HCT116 (cell line): ENCODE measurements at regions of chr9 and their contacts with region 1.

Region 1: GRCh38 chr9:72856972-72857623 is 95.8 kb downstream of the ALDH1A1 start:
- DNase-seq: peak; percentile 65
- ATAC-seq: peak; percentile 79
- H3K4me3 ChIP-seq: no peak overlapping the region
- H3K27ac ChIP-seq: no peak overlapping the region
- H3K4me1 ChIP-seq: peaks cover 8 to 21% of the 10 kb centered on the region in 2 experiments; a peak in 3 of 4 replicates
- H3K27me3 ChIP-seq: no peaks in the 10 kb centered on the region
- CTCF ChIP-seq: peak; percentile 60 to 81 (median 68); a peak in 5 of 6 replicates
- POLR2A ChIP-seq: no peak
- RAD21 ChIP-seq: peak; percentile 65

Region 2: DNA sequence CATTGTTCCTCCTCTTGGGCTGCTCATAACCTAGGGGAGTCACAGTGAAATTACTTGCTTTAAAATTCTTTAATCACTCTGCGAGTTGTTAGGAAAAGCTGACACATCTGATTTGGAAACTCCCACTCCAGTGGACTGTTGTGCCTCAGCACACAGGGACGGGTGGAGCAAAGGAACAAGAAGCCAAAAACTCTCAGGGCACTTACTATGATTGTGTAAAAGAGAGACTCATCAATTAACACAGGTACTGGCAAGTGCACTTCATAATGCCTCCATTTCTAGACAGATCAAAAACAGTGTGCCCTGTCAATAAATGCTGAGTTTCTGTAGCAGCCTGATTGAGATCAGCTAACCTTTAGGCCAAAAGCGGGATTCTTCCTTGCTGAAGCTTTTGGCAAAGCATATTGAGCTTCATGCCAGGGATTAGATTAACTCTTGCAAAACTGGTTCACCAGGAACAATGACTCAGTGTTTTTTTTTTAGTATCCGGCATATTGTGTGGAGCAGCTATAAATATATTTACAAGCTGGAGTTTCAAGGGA is 279.8 kb before region 1 on chr9:
- CTCF ChIA-PET with region 1: no interaction called
- POLR2A ChIA-PET with region 1: no interaction called
- RAD21 ChIA-PET with region 1: no interaction called
- intact Hi-C with region 1: no loop called
- DNase-seq: peak; percentile 68
- ATAC-seq: peak; percentile 37
- H3K4me3 ChIP-seq: peak overlapping the region; percentile 12 to 38; a peak in 3 of 4 replicates
- H3K27ac ChIP-seq: peak overlapping the region; percentile 81
- H3K4me1 ChIP-seq: peaks cover 65 to 88% of the 10 kb centered on the region in 2 experiments
- H3K27me3 ChIP-seq: no peaks in the 10 kb centered on the region
- CTCF ChIP-seq: no peak
- POLR2A ChIP-seq: no peak
- RAD21 ChIP-seq: peak; percentile 47

Region 3: GRCh38 chr9:72834994-72835393 is 22.1 kb before region 1 on chr9:
- CTCF ChIA-PET with region 1: interaction called, 3 read pairs
- POLR2A ChIA-PET with region 1: no interaction called
- RAD21 ChIA-PET with region 1: no interaction called
- intact Hi-C with region 1: loop called (anchors 2 kb)
- DNase-seq: no peak
- ATAC-seq: no peak
- H3K4me3 ChIP-seq: no peak overlapping the region
- H3K27ac ChIP-seq: no peak overlapping the region
- H3K4me1 ChIP-seq: no peaks in the 10 kb centered on the region
- H3K27me3 ChIP-seq: no peaks in the 10 kb centered on the region
- CTCF ChIP-seq: no peak
- POLR2A ChIP-seq: no peak
- RAD21 ChIP-seq: no peak

Region 4: DNA sequence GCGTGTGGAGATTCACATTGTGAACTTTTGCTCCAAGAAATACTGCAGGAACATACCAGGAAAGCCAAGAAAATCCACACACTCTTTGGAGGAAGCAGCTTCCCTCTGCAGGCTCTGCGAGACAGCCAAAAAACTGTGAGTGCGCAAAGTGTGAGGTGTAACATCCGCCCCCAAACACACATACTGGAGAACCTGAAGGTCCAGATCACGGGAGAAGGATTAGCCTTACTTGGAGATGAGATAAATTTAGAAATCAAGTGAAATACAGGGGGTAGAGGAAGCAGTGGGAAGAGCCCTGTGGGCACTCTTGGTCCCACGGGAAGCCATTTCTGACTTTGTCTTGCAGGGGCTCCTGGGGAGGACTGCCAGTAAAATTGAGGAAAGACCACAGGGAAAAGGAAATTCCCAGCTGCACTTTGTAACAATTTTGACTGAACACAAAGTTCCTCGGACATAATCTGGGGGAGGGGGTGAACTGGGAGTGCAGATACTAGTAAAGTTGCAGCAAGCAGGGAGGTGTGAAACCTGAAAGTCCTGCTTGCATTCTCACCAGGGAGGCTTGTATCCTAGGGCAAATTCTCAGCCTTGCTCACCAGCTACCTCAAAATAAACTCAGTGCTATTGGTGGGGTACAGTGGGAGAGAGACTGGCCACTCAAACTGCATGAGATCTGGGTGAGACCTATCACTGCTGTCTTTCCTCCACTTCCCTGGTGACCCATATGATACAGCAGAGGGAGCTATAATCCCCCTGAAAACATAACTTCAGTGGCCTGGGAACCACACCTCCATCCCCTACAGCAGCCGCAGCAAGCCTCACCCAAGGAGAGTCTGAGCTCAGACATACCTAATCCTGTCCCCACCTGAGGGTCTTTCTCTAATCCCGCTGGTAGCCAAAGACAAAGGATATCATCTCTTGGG is 13.3 kb before region 1 on chr9:
- CTCF ChIA-PET with region 1: interaction called, 16 read pairs
- POLR2A ChIA-PET with region 1: no interaction called
- RAD21 ChIA-PET with region 1: no interaction called
- intact Hi-C with region 1: no loop called
- DNase-seq: no peak
- ATAC-seq: peak; percentile 99
- H3K4me3 ChIP-seq: no peak overlapping the region
- H3K27ac ChIP-seq: no peak overlapping the region
- H3K4me1 ChIP-seq: peaks cover 3 to 4% of the 10 kb centered on the region in 2 experiments; a peak in 3 of 4 replicates
- H3K27me3 ChIP-seq: no peaks in the 10 kb centered on the region
- CTCF ChIP-seq: peak; percentile 15 to 48 (median 38); a peak in 4 of 6 replicates
- POLR2A ChIP-seq: no peak
- RAD21 ChIP-seq: peak; percentile 54

Region 5: GRCh38 chr9:72871685-72872084 is 14.6 kb after region 1 on chr9:
- CTCF ChIA-PET with region 1: interaction called, 17 read pairs
- POLR2A ChIA-PET with region 1: no interaction called
- RAD21 ChIA-PET with region 1: interaction called in 1 of 2 experiments, 3 read pairs
- intact Hi-C with region 1: no loop called
- DNase-seq: peak; percentile 26
- ATAC-seq: peak; percentile 42
- H3K4me3 ChIP-seq: no peak overlapping the region
- H3K27ac ChIP-seq: no peak overlapping the region
- H3K4me1 ChIP-seq: no peaks in the 10 kb centered on the region
- H3K27me3 ChIP-seq: no peaks in the 10 kb centered on the region
- CTCF ChIP-seq: peak; percentile 31 to 71 (median 69); a peak in 4 of 6 replicates
- POLR2A ChIP-seq: no peak
- RAD21 ChIP-seq: peak; percentile 76

Region 6: GRCh38 chr9:73023025-73023541 is 166.0 kb after region 1 on chr9:
- CTCF ChIA-PET with region 1: interaction called, 35 read pairs
- POLR2A ChIA-PET with region 1: no interaction called
- RAD21 ChIA-PET with region 1: no interaction called
- intact Hi-C with region 1: loop called (anchors 5 kb)
- DNase-seq: peak; percentile 62
- ATAC-seq: peak; percentile 76
- H3K4me3 ChIP-seq: no peak overlapping the region
- H3K27ac ChIP-seq: no peak overlapping the region
- H3K4me1 ChIP-seq: 0 out of 4 replicates have a peak, but pooled peaks cover 0 to 4% of the 10 kb centered on the region in 2 experiments
- H3K27me3 ChIP-seq: no peaks in the 10 kb centered on the region
- CTCF ChIP-seq: peak; percentile 66 to 83 (median 82); a peak in 5 of 6 replicates
- POLR2A ChIP-seq: no peak
- RAD21 ChIP-seq: peak; percentile 69

Region 7: GRCh38 chr9:73081979-73082657 is 225.0 kb after region 1 on chr9:
- CTCF ChIA-PET with region 1: interaction called, 46 read pairs
- POLR2A ChIA-PET with region 1: interaction called, 4 read pairs
- RAD21 ChIA-PET with region 1: no interaction called
- intact Hi-C with region 1: loop called (anchors 5 kb)
- DNase-seq: peak; percentile 41
- ATAC-seq: peak; percentile 68
- H3K4me3 ChIP-seq: no peak overlapping the region
- H3K27ac ChIP-seq: no peak overlapping the region
- H3K4me1 ChIP-seq: peaks cover 5 to 12% of the 10 kb centered on the region in 2 experiments; a peak in 3 of 4 replicates
- H3K27me3 ChIP-seq: no peaks in the 10 kb centered on the region
- CTCF ChIP-seq: peak; percentile 57 to 78 (median 78); a peak in 5 of 6 replicates
- POLR2A ChIP-seq: no peak
- RAD21 ChIP-seq: peak; percentile 73

Region 8: DNA sequence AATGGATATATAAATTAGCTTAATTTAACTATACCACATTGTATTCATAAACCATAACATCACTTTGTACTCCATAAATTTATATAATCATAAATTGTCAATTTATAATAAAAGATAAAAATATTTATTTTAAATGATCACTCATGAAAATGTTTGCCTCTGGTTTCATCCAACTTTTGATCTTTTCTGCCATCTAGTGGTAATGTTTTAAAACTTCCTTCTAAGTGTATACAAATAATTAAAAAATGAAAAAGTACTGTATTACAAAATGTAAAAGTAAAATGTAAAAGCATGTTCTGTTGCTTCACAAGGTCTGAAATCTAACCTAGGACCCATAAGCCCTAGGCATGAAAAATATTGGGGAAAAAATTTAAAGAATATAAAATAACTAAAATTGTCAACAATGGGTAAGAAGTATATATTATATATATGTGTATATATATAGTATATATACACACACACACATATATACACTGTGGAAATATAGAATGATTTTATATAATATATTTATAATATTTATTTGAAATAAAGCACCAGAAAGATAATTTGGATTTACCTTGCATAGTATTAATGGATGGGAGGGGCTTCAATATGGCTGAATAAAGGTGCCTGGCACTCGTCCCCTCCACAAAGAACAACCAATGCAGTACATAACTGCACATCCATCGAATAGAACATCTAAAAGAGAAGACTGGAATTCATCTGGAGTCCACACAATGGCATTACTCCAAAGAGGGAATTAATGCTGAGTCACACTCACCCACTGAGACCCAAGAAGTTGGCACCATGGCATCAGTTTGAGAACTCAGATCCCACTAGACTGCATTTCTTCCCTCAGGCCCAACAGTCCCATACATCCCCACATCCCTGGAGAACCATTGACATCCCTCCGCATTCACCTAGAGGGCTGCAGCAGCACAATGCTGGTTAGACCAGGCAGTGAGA is 327.1 kb after region 1 on chr9:
- CTCF ChIA-PET with region 1: interaction called, 4 read pairs
- POLR2A ChIA-PET with region 1: no interaction called
- RAD21 ChIA-PET with region 1: no interaction called
- intact Hi-C with region 1: loop called (anchors 2 kb)
- DNase-seq: peak; percentile 38
- ATAC-seq: no peak
- H3K4me3 ChIP-seq: no peak overlapping the region
- H3K27ac ChIP-seq: no peak overlapping the region
- H3K4me1 ChIP-seq: peaks cover 11 to 27% of the 10 kb centered on the region in 2 experiments; a peak in 3 of 4 replicates
- H3K27me3 ChIP-seq: no peaks in the 10 kb centered on the region
- CTCF ChIP-seq: peak in 2 of 3 experiments; percentile 20 to 87; a peak in 4 of 6 replicates
- POLR2A ChIP-seq: no peak
- RAD21 ChIP-seq: peak; percentile 81